Kidney (tissue), 22 donors: ENCODE measurements at regions of chr15 and their contacts with region 1.

Region 1: GRCh38 chr15:69074001-69074842 is 59.7 kb downstream of the NOX5 start:
- DNase-seq: peak; percentile 84 to 92 (median 89)
- H3K4me3 ChIP-seq: peak overlapping the region; percentile 57 to 69 (median 68)
- H3K27ac ChIP-seq: peak overlapping the region in 1 of 2 donors; percentile 51
- H3K4me1 ChIP-seq: peaks cover 0 to 19% (median 5%) of the 10 kb centered on the region in 3 donors
- H3K27me3 ChIP-seq: no peaks in the 10 kb centered on the region
- CTCF ChIP-seq: peak; percentile 5

Region 2: DNA sequence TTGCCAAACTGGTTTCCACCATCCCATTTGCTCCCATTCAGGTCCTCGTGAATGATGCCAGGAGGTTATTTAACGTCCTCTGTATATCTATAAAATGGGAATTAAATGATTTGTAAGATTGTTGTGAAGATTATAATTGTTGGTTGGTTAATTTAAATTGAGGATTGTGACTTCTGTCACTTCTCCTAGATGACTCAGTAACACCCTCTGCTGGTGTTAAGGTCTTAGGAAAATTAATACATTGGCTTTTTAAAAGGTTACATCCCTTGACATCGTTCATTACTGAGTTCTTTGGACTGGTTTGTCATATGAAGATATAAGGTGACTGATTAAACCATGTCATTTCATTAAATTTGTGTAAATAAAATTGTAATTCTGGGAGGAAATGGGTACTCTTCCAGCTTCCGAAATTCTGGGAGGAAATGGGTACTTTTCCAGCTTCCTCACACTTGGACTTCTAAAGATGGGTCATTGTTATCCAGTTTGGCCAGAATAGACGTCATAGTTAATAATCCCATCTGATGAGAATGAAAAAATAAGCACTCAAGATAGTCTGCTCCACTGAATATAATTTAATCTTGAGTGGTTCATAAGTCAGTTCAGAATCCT is 191.2 kb after region 1 on chr15:
- intact Hi-C with region 1: loop called (anchors 10 kb)
- DNase-seq: peak in 2 of 5 donors; percentile 43 to 52
- H3K4me3 ChIP-seq: no peak overlapping the region
- H3K27ac ChIP-seq: no peak overlapping the region
- H3K4me1 ChIP-seq: no peaks in the 10 kb centered on the region
- H3K27me3 ChIP-seq: no peaks in the 10 kb centered on the region
- CTCF ChIP-seq: peak; percentile 45